ENCODE measurements at regions of chr12 and their contacts with region 1.

Region 1: DNA sequence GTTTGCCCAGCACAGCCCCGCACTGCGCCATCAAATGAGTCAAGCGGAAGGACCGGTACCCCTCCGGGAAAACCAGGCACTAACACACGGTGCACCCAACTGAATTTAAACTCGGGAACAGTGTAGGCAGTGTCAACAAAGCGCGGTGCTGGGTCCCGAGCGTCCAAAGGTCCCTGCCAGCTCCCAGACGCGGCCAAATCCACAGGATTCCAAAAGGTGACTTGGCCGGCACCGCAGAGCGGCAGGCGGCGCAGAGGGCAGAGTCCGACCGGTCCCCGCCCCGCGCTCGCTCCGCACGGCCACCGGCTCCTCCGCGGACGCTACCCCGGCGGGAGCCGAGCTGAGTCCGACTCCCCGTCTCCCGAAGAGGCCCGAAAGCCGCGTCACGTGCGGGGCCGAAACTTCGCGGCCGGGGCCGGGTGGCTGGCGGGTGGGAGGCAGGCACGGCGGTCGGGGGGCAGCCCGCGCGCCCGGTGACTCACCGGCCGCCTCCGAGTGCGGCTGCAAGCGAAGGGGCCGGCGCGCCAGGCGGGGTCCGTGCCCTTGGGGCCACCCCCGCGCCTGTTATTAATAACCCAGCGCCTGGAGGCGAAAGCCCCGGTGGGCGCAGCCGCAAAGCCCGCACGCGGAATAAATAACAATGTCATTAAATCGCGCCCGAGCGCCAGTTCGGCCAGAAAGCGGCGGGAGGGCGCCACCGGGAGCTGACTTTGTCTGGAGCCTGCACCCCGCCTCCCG is 863 bp downstream of the DENND5B start:
- DNase-seq: peak; percentile 59
- CTCF ChIP-seq: no peak

Region 2: DNA sequence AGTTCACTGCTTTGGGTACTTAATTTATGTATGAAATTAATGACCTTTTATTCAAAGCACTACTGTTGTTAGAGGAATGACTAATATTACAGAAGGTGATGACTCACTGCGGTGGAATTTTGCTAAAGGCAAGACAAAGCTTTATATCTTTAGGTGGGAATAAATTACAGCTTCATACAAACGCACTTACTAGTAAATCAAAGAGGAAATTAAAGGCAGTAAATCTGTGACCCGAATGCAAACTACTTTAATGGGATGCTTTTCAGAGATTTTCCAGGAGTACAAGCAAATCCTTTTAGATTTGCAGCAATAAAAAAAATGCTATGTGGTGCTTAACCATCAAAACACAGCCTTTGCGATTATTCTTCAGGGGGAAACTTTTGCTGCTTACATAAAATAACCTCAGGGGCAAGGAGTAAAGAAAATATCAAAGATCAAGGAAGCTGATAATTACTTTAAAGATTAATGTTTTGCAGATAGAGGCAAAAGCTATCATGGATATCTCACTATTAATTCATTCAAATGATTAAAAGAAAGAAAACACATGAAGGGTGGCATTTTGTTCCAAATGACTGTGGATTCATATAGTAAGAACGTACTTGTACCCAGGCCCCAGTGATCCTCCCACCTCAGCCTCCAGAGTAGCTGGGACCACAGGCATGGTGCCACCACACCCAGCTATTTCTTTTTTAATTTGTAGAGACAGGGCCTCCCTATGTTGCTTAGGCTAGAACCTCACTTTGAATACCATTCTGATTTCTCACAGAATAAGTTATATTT is 98.1 kb before region 1 on chr12:
- in situ Hi-C with region 1: loop called (anchors 25 kb)
- DNase-seq: no peak
- CTCF ChIP-seq: no peak

Region 3: DNA sequence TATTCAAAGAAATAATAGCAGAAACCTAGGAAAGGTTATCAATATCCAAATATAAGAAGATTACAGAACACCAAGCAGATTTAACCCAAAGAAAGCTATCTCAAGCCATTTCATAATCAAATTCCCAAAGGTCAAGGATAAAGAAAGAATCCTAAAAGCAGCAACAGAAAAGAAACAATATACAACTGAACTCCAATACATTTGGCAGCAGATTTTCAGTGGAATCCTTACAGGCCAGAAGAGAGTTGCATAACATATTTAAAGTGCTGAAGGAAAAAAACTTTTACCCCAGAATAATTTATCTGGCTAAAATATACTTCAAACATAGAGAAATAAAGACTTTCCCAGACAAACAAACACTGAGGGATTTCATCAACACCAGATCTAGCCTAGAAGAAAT is 53.4 kb before region 1 on chr12:
- in situ Hi-C with region 1: loop called (anchors 10 kb)
- DNase-seq: no peak
- CTCF ChIP-seq: no peak

Region 4: GRCh38 chr12:31634620-31635019 is 44.5 kb after region 1 on chr12:
- in situ Hi-C with region 1: loop called (anchors 5 kb)
- DNase-seq: no peak
- CTCF ChIP-seq: no peak

Region 5: DNA sequence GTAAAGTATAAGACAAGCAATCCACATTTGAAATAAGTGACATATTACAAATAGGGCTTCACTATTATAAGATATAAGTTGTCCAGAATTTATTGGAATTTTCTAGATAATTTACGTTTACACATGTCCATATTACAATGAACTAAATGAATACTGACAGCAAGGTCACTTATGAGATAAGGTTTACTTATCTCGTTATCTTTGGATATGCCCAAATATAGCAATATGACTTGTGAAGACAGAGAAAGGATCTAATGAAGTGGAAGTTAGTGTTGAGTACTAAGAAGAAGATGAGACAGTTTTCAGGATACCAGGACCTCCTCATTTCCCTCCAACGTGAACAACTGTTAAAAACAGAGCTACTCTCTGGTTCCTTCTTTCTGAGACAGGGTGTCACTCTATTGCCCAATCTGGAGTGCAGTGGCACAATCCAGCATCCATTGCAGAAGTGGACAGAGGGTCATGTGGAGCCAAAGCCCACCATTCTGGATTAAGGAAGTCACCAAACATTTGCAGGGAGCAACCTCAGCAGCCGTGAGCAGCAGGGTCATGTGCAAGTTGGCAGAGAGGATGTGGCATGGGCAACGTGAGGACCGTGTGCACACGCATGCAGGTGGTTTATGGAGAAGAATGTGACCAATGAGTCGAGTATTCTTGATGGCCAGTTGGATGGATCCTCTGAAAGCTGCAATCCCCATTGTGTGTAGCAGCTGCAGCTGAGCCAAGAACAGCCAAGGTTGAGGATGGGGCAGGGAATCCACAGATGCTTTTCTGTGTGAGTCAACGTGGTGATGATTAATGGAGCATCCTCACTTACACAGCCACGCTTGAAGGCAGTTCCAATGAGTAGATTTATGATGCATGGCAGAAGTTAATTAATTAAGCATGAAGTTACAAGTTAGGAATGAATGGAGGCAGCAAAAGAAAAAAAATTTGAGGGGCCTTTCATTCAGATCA is 627.6 kb after region 1 on chr12:
- in situ Hi-C with region 1: no loop called
- DNase-seq: no peak
- CTCF ChIP-seq: no peak